ENCODE measurements at regions of chr1 and their contacts with region 1.

Region 1: GRCh38 chr1:185813401-185813979 is 79.3 kb downstream of the HMCN1 start:
- DNase-seq: no peak
- ATAC-seq: no peak
- H3K4me3 ChIP-seq: no peak overlapping the region
- H3K27ac ChIP-seq: no peak overlapping the region
- H3K4me1 ChIP-seq: no peaks in the 10 kb centered on the region
- H3K27me3 ChIP-seq: no peaks in the 10 kb centered on the region
- CTCF ChIP-seq: peak; percentile 43

Region 2: GRCh38 chr1:185608177-185608576 is 205.3 kb before region 1 on chr1:
- intact Hi-C with region 1: no loop called
- DNase-seq: no peak
- ATAC-seq: no peak
- H3K4me3 ChIP-seq: no peak overlapping the region
- H3K27ac ChIP-seq: no peak overlapping the region
- H3K4me1 ChIP-seq: no peaks in the 10 kb centered on the region
- H3K27me3 ChIP-seq: no peaks in the 10 kb centered on the region
- CTCF ChIP-seq: no peak

Region 3: GRCh38 chr1:185853739-185854138 is 40.2 kb after region 1 on chr1:
- intact Hi-C with region 1: no loop called
- DNase-seq: no peak
- ATAC-seq: no peak
- H3K4me3 ChIP-seq: no peak overlapping the region
- H3K27ac ChIP-seq: no peak overlapping the region
- H3K4me1 ChIP-seq: no peaks in the 10 kb centered on the region
- H3K27me3 ChIP-seq: no peaks in the 10 kb centered on the region
- CTCF ChIP-seq: no peak

Region 4: DNA sequence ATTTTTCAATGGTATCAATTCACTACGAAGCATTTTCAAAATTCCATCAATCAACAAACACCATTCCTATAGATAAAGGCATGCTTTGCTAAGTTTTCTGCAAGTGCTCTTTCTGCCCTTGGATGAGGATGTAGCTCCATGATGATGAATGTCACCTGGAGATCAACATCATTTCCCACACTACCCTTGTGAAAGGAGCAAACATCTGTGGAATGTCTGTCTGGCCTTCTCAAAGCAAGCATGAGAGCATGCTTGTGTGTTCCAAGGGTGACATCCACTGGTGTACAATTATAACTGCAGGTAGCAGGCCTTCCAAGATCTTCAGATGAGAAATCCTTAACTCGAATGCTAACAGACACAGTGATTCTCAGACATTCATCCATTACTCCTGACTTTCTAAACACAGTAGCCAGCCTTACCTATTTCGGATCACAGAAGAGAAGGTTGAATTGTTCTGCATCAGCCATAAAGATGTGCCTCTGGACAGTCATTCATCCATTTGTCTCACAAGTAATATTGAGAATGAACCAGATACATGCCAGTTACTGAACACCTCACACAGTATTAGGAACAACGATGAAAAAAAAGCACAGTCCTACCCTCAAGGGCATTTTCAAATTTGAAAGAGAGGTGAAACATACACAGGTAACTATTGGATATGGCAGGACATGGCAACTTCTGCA is 399.2 kb after region 1 on chr1:
- intact Hi-C with region 1: loop called (anchors 5 kb)
- DNase-seq: no peak
- ATAC-seq: peak; percentile 57 to 83 (median 74)
- H3K4me3 ChIP-seq: no peak overlapping the region
- H3K27ac ChIP-seq: no peak overlapping the region
- H3K4me1 ChIP-seq: no peaks in the 10 kb centered on the region
- H3K27me3 ChIP-seq: no peaks in the 10 kb centered on the region
- CTCF ChIP-seq: peak; percentile 63